B cell (primary cell): ENCODE measurements at regions of chr15 and their contacts with region 1.

Region 1: GRCh38 chr15:25939122-25939521 is 76.0 kb upstream of the ATP10A start:
- DNase-seq: peak; percentile 79
- ATAC-seq: peak; percentile 96
- H3K4me3 ChIP-seq: no peak overlapping the region
- H3K4me3 Mint-ChIP-seq: peak overlapping the region; percentile 11
- H3K27ac ChIP-seq: peak overlapping the region; percentile 12 to 28
- H3K27ac Mint-ChIP-seq: peak overlapping the region; percentile 69
- H3K4me1 ChIP-seq: peaks cover 23 to 29% of the 10 kb centered on the region in 2 donors
- H3K4me1 Mint-ChIP-seq: peaks cover 33% of the 10 kb centered on the region
- H3K27me3 ChIP-seq: no peaks in the 10 kb centered on the region
- H3K27me3 Mint-ChIP-seq: no peaks in the 10 kb centered on the region
- CTCF ChIP-seq: no peak

Region 2: DNA sequence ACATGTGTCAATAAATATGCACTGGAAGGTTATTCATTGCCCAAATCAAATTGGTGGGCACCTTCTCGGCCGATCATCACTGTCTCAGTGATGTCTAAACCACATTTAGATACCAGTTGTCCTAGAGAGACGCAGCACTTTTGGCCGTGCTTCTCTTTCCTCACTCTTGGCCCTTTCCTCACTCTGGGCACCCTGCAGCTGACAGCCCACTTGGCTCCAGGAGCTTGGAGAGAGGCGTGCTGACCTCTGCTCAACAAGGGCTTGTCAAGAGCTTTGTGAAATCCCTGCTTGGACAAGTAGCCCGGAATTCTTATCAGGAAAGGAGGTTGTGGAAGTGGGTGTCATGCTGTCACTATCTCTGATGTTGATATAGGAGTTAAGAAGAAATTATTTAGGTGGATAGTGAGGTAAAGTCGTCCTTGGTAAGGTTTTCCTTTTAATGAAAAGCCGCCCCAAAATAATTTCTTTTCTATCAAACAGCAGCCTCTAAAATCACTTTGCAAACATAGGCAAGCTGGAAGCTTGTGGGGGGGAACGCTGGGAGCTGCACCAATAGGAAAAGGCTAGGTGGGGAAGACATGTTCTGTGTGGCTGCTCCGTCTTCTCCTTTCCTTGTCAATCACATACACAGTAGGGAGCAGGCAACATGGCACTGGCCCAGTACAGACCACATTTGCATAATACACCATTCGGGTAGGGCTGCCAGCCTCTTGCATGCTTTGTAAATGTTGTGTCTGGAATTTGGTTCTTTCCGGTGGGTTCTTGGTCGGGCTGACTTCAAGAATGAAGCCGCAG is 373.5 kb before region 1 on chr15:
- CTCF ChIA-PET with region 1: no interaction called
- POLR2A ChIA-PET with region 1: no interaction called
- intact Hi-C with region 1: no loop called
- DNase-seq: no peak
- ATAC-seq: no peak
- H3K4me3 ChIP-seq: no peak overlapping the region
- H3K4me3 Mint-ChIP-seq: no peak overlapping the region
- H3K27ac ChIP-seq: no peak overlapping the region
- H3K27ac Mint-ChIP-seq: no peak overlapping the region
- H3K4me1 ChIP-seq: no peaks in the 10 kb centered on the region
- H3K4me1 Mint-ChIP-seq: no peaks in the 10 kb centered on the region
- H3K27me3 ChIP-seq: no peaks in the 10 kb centered on the region
- H3K27me3 Mint-ChIP-seq: no peaks in the 10 kb centered on the region
- CTCF ChIP-seq: no peak

Region 3: DNA sequence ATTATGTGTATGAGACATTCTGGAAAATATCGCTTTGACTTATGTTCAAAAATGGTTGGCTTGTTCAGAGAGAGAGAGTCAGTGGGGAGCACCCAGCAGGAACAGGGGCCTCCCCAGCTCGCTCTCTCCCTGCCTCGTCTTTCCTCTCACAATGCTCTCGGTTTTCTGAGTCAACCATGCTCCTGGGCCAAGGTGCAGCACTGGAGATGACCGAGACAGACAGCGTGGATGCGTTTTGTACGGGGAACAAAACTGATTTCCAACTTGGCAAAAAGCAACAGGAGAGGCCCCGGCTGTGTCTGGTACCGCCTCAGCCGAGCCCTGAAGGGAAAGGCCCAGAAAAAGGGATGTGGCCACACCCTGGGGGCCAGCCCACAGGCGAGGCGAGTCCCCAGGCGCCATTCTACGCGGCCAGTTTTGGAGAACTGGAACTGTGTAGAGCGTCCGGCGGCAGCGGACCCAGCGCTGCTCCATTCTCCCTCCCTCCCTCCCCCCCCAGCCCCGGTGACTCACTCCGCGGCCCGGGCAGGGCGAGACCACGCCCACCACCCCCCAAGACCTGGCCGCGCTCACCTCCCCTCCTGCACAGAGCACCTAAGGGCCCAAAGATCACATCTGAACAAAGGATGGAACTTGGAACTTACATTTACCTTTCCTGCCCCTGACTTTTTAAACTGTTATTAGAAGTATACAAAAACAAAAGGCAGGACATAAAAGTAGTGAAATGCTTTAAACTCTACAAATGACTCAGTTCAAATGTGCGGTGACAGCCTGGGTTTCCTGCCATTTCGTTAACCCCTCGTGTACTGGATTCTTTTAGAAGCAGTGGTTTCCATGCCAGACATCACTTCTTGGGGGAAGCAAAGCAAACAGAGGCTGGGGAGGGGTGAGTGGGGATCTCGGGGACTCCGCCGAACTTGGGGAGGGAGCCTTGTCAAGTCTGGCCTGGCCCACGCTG is 88.7 kb before region 1 on chr15:
- CTCF ChIA-PET with region 1: no interaction called
- POLR2A ChIA-PET with region 1: no interaction called
- intact Hi-C with region 1: loop called (anchors 2 kb)
- DNase-seq: peak; percentile 76
- ATAC-seq: peak; percentile 86
- H3K4me3 ChIP-seq: peak overlapping the region in 4 of 5 experiments; percentile 30 to 47 (median 44)
- H3K4me3 Mint-ChIP-seq: peak overlapping the region; percentile 80
- H3K27ac ChIP-seq: peak overlapping the region; percentile 57
- H3K27ac Mint-ChIP-seq: peak overlapping the region; percentile 80
- H3K4me1 ChIP-seq: peaks cover 39 to 50% of the 10 kb centered on the region in 2 donors
- H3K4me1 Mint-ChIP-seq: peaks cover 59% of the 10 kb centered on the region
- H3K27me3 ChIP-seq: no peaks in the 10 kb centered on the region
- H3K27me3 Mint-ChIP-seq: peaks cover 3% of the 10 kb centered on the region
- CTCF ChIP-seq: no peak

Region 4: DNA sequence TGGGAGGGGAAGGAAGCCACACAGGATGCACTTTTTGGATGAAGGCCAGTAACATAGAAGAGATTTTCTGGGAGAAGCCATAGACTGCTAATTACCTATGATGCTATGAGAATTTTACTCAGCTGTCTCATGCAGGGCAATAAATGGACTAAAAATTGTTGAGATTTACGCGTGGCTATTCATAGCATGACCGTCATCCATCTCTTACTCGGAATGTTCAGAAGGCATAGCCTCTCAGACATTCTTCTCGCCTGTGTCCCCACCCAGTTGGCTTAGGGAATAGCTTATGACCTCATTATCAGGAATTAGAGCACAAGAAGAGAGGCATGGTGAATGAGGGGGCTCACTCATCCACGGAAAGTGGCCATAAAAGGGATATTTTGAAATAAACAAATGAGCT is 31.9 kb after region 1 on chr15:
- CTCF ChIA-PET with region 1: no interaction called
- POLR2A ChIA-PET with region 1: no interaction called
- intact Hi-C with region 1: no loop called
- DNase-seq: no peak
- ATAC-seq: no peak
- H3K4me3 ChIP-seq: no peak overlapping the region
- H3K4me3 Mint-ChIP-seq: no peak overlapping the region
- H3K27ac ChIP-seq: no peak overlapping the region
- H3K27ac Mint-ChIP-seq: no peak overlapping the region
- H3K4me1 ChIP-seq: no peaks in the 10 kb centered on the region
- H3K4me1 Mint-ChIP-seq: no peaks in the 10 kb centered on the region
- H3K27me3 ChIP-seq: no peaks in the 10 kb centered on the region
- H3K27me3 Mint-ChIP-seq: peaks cover 3% of the 10 kb centered on the region
- CTCF ChIP-seq: no peak

Region 5: GRCh38 chr15:26144836-26145235 is 205.7 kb after region 1 on chr15:
- CTCF ChIA-PET with region 1: no interaction called
- POLR2A ChIA-PET with region 1: no interaction called
- intact Hi-C with region 1: no loop called
- DNase-seq: no peak
- ATAC-seq: no peak
- H3K4me3 ChIP-seq: no peak overlapping the region
- H3K4me3 Mint-ChIP-seq: no peak overlapping the region
- H3K27ac ChIP-seq: no peak overlapping the region
- H3K27ac Mint-ChIP-seq: no peak overlapping the region
- H3K4me1 ChIP-seq: no peaks in the 10 kb centered on the region
- H3K4me1 Mint-ChIP-seq: no peaks in the 10 kb centered on the region
- H3K27me3 ChIP-seq: no peaks in the 10 kb centered on the region
- H3K27me3 Mint-ChIP-seq: no peaks in the 10 kb centered on the region
- CTCF ChIP-seq: no peak